Natural killer cell (primary cell): ENCODE measurements at regions of chr7 and their contacts with region 1.

Region 1: GRCh38 chr7:100889761-100890634 is 483 bp upstream of the UFSP1 start:
- DNase-seq: peak; percentile 88 to 97
- ATAC-seq: peak; percentile 91 to 97 (median 93)
- H3K4me3 ChIP-seq: peak overlapping the region; percentile 62
- H3K4me3 Mint-ChIP-seq: peak overlapping the region; percentile 89
- H3K27ac ChIP-seq: peak overlapping the region; percentile 25
- H3K27ac Mint-ChIP-seq: peak overlapping the region in 1 of 2 donors; percentile 82
- H3K4me1 ChIP-seq: peaks cover 54% of the 10 kb centered on the region
- H3K4me1 Mint-ChIP-seq: peaks cover 12 to 43% of the 10 kb centered on the region in 2 donors
- H3K27me3 ChIP-seq: peaks cover 9% of the 10 kb centered on the region
- H3K27me3 Mint-ChIP-seq: peaks cover 17 to 29% of the 10 kb centered on the region in 2 donors
- CTCF ChIP-seq: no peak

Region 2: DNA sequence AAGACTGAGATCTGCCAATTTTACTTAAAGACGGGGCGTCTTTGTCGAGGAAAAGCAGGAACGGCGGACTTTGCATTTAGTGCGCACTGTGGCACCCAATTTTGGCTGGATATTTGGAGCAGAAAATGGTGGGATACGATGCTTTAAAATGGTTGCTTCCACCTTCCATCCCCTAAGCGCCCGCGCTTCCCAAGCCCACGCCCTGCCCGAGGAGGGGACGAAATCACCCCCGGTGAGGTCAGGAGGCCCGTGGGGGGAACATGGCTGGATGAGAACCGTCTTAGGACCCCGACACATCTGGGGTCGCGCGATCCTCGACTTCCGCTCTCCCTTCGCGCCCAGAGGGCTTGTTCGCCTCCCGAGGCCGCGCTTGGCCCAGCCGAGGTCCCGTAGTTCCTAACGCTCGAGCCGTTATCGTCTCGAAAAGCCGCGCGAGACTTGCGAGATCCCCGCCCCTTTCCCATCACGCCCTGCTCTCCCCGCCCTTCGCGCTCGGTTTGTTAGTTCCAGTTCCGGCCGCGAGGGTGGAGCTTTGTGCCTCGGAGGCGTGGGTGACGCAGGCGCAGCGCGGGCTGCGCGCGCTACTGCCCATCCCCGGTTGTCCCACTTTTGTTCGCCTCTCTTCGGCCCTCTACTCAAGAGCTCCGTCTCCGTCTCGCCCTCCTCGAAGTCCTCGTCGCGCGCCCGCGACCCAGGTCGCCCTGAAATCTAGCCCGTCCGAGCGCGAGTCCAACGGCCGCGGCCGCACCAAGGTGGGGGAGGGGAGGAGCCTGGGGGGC is 15.2 kb before region 1 on chr7 and contains the start of gene SRRT:
- intact Hi-C with region 1: loop called (anchors 2 kb)
- DNase-seq: peak; percentile 97 to 99
- ATAC-seq: peak; percentile 95 to 98 (median 95)
- H3K4me3 ChIP-seq: peak within 1 kb of the TSS; percentile 65
- H3K4me3 Mint-ChIP-seq: peak within 1 kb of the TSS; percentile 98
- H3K27ac ChIP-seq: peak within 1 kb of the TSS; percentile 91
- H3K27ac Mint-ChIP-seq: peak within 1 kb of the TSS; percentile 90 to 99
- H3K4me1 ChIP-seq: peaks cover 28% of the 10 kb centered on the region
- H3K4me1 Mint-ChIP-seq: peaks cover 30 to 43% of the 10 kb centered on the region in 2 donors
- H3K27me3 ChIP-seq: no peaks in the 10 kb centered on the region
- H3K27me3 Mint-ChIP-seq: no peaks in the 10 kb centered on the region
- CTCF ChIP-seq: peak; percentile 12
- total RNA-seq, gene SRRT: 281 to 307 (median 288) TPM

Region 3: GRCh38 chr7:100933735-100934134 is 43.7 kb after region 1 on chr7:
- intact Hi-C with region 1: no loop called
- DNase-seq: no peak
- ATAC-seq: no peak
- H3K4me3 ChIP-seq: no peak overlapping the region
- H3K4me3 Mint-ChIP-seq: no peak overlapping the region
- H3K27ac ChIP-seq: no peak overlapping the region
- H3K27ac Mint-ChIP-seq: no peak overlapping the region
- H3K4me1 ChIP-seq: no peaks in the 10 kb centered on the region
- H3K4me1 Mint-ChIP-seq: no peaks in the 10 kb centered on the region
- H3K27me3 ChIP-seq: peaks cover 2% of the 10 kb centered on the region
- H3K27me3 Mint-ChIP-seq: peaks cover 0 to 9% of the 10 kb centered on the region in 2 donors
- CTCF ChIP-seq: no peak

Region 4: DNA sequence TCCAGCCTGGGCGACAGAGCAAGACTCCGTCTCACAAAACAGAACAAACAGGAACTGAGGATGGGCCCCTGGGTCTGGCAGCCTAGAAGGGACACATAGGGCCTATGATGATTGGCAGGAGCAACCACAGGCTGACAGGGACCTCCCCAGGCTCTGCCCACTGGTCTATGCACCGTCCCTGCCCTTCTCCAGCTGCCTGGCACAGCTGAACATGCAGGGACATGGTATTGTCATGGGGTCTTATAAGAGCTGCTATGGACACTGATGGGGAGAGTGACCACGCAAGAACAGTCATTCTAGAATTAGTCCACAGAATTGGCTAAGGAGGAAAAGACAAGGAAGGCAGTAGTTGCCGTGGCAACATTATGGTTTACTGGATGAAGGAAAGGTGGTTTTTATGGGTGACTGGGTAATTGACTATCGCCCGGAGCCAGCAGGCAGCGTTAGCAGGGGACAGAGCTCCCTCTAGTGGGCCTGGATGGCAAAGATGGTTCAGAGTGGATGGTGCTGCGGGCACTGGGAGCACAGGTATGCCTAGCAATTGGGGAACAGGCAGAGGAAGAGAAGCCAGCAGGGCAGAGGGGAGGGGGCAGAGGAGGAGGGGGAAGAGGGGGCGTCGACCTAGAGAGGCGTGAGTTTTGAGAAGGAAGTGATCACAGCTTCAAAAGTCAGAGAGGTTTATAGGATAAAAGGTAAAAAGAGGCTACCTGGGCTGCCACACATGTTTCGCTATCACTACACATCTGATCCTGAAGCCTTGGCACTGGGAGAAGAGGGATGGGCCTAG is 187.5 kb after region 1 on chr7:
- intact Hi-C with region 1: loop called (anchors 5 kb)
- DNase-seq: peak; percentile 69 to 90
- ATAC-seq: peak; percentile 92 to 100 (median 99)
- H3K4me3 ChIP-seq: no peak overlapping the region
- H3K4me3 Mint-ChIP-seq: no peak overlapping the region
- H3K27ac ChIP-seq: no peak overlapping the region
- H3K27ac Mint-ChIP-seq: no peak overlapping the region
- H3K4me1 ChIP-seq: peaks cover 7% of the 10 kb centered on the region
- H3K4me1 Mint-ChIP-seq: peaks cover 6 to 8% of the 10 kb centered on the region in 2 donors
- H3K27me3 ChIP-seq: no peaks in the 10 kb centered on the region
- H3K27me3 Mint-ChIP-seq: peaks cover 0 to 13% of the 10 kb centered on the region in 2 donors
- CTCF ChIP-seq: peak; percentile 87